CD8-positive, alpha-beta T cell (primary cell): ENCODE measurements at regions of chrX and their contacts with region 1.

Region 1: DNA sequence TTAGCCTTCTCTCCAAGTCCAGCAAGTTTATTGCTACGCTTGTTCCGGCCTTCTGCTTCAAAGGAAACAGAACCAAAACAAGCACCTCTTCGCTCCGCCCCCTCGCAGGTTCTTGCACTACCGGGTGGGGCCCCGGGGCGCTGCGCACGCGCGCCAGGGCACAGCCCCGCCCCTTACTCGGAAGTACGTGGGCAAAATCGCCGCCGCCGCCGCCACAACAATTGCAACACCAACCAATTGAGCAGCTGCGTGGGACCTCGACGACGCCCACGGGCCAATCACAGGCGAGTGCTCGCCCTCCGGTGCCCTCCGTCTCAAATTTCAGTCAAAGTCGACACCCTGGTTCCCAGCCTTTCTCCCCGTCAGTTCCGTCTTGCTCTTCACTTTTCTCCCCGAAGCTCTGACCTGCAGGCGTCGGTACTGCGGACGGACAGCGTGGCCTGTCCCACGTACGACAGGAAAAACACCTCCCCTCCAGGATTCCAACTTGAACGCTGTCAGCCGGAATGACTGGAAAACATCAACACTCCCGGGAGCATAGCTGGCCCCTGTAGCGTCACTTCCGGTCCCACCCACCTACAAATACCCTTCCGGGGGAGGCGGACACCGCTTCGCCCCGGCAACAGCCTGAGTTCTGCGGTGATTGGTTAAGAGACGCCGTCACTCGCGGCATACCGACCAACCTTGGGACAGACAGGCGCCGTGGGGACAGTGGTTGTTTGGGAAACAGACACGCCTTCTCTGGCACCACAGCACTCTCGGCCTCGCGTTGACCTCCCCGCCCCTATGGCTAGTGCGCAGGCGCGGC is 624 bp upstream of the OTUD5 start:
- DNase-seq: peak; percentile 83 to 98 (median 91)
- ATAC-seq: peak; percentile 76
- H3K4me3 ChIP-seq: peak overlapping the region; percentile 75 to 94
- H3K4me3 Mint-ChIP-seq: peak overlapping the region; percentile 99
- H3K27ac ChIP-seq: peak overlapping the region; percentile 100
- H3K27ac Mint-ChIP-seq: peak overlapping the region; percentile 100
- H3K4me1 ChIP-seq: peaks cover 44% of the 10 kb centered on the region
- H3K4me1 Mint-ChIP-seq: peaks cover 39% of the 10 kb centered on the region
- H3K27me3 ChIP-seq: no peaks in the 10 kb centered on the region
- H3K27me3 Mint-ChIP-seq: no peaks in the 10 kb centered on the region
- CTCF ChIP-seq: no peak

Region 2: DNA sequence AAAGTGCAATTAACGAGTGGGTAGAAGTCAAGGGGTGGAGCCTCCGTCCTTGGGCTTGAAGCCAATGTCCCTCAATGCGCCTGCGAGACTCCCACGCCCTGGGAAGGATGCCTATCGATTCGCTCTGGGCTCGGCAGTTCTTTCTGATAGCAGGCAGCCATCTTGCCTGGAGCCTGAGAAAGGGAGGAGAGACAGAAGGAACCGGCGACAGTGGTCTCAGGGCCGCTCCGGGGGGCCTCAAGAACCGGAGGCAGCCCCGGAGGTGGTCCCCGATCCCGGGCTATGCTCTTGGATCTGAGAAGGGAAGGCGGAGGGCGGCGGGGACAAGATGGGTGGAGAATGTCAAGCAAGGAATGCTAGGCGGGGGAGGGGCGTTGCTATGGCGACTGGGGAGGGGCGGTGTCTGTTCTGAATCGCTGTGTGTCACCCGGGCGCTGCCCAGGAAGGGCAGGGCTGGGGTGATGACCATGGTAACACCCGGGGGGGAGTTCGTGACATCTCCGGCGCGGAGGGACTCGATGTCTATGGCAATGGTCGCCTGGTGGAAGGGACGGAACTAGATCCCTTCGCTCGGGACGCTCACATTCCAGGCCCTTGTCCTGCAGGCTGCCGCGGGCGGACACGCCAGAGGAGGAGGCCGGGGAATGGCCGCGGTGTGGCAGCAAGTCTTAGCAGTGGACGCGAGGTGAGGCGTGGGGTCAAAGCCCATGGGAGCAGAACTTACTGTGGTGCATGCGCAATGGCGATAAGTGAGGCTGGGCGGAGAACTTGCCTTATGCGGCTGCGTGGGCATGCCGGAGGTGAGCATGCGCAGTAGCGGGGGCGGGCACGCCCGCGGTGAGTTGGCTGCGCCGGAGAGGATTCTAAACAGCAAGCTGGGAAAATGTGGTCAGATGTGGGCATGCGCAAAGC is 360.4 kb before region 1 on chrX and contains the start of gene WDR13:
- CTCF ChIA-PET with region 1: no interaction called
- POLR2A ChIA-PET with region 1: no interaction called
- intact Hi-C with region 1: loop called in 1 of 2 experiments (anchors 1 kb)
- DNase-seq: peak; percentile 79 to 94 (median 90)
- ATAC-seq: peak; percentile 82
- H3K4me3 ChIP-seq: peak within 1 kb of the TSS; percentile 90 to 99
- H3K4me3 Mint-ChIP-seq: peak within 1 kb of the TSS; percentile 94
- H3K27ac ChIP-seq: peak within 1 kb of the TSS; percentile 100
- H3K27ac Mint-ChIP-seq: peak within 1 kb of the TSS; percentile 100
- H3K4me1 ChIP-seq: peaks cover 7% of the 10 kb centered on the region
- H3K4me1 Mint-ChIP-seq: peaks cover 10% of the 10 kb centered on the region
- H3K27me3 ChIP-seq: no peaks in the 10 kb centered on the region
- H3K27me3 Mint-ChIP-seq: no peaks in the 10 kb centered on the region
- CTCF ChIP-seq: no peak
- total RNA-seq, gene WDR13: 41.6 to 51.6 TPM

Region 3: GRCh38 chrX:48826135-48826875 is 131.7 kb before region 1 on chrX and contains the start of gene ERAS:
- CTCF ChIA-PET with region 1: no interaction called
- POLR2A ChIA-PET with region 1: no interaction called
- intact Hi-C with region 1: no loop called
- DNase-seq: peak in 4 of 9 experiments; percentile 16 to 51 (median 32)
- ATAC-seq: peak; percentile 71
- H3K4me3 ChIP-seq: no peak within 1 kb of the TSS
- H3K4me3 Mint-ChIP-seq: peak within 1 kb of the TSS; percentile 68
- H3K27ac ChIP-seq: no peak within 1 kb of the TSS
- H3K27ac Mint-ChIP-seq: no peak within 1 kb of the TSS
- H3K4me1 ChIP-seq: no peaks in the 10 kb centered on the region
- H3K4me1 Mint-ChIP-seq: peaks cover 8% of the 10 kb centered on the region
- H3K27me3 ChIP-seq: peaks cover 0 to 5% of the 10 kb centered on the region in 2 experiments
- H3K27me3 Mint-ChIP-seq: peaks cover 17% of the 10 kb centered on the region
- CTCF ChIP-seq: no peak
- total RNA-seq, gene ERAS: not detected

Region 4: DNA sequence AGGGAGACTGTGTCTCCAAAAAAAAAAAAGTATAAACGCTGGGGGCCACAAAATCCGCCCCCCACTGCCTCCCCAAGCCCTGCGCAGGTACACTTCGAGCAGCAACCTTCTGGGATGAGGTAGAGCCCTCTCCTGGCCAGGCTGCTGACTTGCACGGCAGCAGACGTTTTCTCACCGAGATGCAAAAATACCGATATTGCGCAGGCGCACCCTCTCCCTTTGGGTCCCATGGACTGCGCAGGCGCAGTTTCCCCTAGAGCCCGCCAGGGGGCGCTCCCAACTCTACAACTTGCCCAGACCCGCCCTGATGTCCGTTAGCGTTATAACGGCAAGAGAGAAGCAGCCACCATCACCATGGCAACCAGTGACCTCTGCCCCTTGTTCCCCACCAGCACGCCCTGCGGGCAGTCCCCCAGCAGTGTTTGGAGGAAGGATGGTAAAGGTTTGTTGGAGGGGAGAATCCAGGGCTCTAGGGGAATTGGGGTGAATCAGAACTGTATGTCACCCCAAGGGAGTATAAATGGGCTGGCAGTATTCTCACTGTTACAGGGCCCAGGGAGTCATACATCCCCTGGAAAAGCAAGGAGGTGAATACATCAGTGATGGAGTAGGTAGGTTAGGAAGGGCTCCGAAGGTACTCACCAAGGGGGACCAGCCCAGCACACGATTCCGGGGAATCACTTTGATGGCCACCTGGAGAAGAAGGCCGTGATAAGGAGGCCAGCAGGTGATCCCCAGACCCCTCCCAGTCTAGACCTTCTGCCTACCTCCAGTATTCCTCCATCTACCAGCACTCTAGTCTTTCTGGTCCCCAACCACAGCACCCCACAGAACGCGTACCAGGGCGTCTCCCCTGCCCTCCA is 40.7 kb before region 1 on chrX:
- CTCF ChIA-PET with region 1: no interaction called
- POLR2A ChIA-PET with region 1: interaction called, 8 read pairs
- intact Hi-C with region 1: loop called (anchors 1 to 5 kb)
- DNase-seq: peak; percentile 77 to 93 (median 88)
- ATAC-seq: peak; percentile 37
- H3K4me3 ChIP-seq: peak overlapping the region; percentile 92 to 95
- H3K4me3 Mint-ChIP-seq: peak overlapping the region; percentile 97
- H3K27ac ChIP-seq: peak overlapping the region; percentile 75 to 100
- H3K27ac Mint-ChIP-seq: peak overlapping the region; percentile 97
- H3K4me1 ChIP-seq: peaks cover 58% of the 10 kb centered on the region
- H3K4me1 Mint-ChIP-seq: peaks cover 56% of the 10 kb centered on the region
- H3K27me3 ChIP-seq: no peaks in the 10 kb centered on the region
- H3K27me3 Mint-ChIP-seq: no peaks in the 10 kb centered on the region
- CTCF ChIP-seq: peak; percentile 77

Region 5: DNA sequence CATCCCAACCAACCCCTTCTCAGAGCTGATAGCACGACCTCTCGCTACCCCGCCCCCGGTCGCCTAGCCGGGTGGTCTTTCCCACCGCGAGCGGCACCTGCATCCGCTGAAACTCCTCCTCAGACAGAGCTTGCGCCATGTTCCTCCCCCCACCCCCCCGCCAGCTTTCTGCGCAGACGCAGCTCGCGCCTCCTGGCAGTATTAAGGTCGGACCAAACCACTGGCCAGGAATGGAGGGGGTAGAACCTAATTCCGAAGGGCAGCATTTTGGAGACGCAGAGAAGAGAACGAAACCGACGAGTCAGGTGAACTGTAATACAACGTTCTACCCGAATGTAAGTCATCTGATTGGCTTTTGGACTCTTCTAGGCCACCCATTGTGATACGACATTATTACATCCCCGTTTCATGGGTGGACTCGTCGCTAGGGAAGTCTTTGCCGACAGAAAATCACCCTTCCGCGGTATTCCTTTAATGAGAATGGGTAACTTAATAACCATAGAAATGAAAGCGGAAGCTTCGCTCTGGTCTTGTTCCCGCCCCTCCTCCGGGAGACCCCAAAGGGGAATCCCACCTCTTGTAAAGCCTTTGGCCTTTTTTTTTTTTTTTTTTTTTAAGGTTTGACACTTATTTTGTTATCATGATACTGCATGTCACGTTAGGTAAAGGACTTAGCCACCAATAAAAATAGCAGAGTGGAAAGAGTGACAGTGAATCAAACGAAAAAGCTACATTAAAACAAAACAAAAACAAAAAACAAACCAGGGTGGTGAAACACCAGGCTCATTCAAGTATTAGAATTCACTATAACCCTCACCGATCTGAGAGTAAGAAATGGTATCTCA is 44.3 kb after region 1 on chrX and contains the start of gene GRIPAP1:
- CTCF ChIA-PET with region 1: no interaction called
- POLR2A ChIA-PET with region 1: interaction called, 9 read pairs
- intact Hi-C with region 1: loop called (anchors 1 kb)
- DNase-seq: peak; percentile 63 to 95 (median 74)
- ATAC-seq: peak; percentile 79
- H3K4me3 ChIP-seq: peak within 1 kb of the TSS; percentile 82 to 87
- H3K4me3 Mint-ChIP-seq: peak within 1 kb of the TSS; percentile 98
- H3K27ac ChIP-seq: peak within 1 kb of the TSS; percentile 96 to 99
- H3K27ac Mint-ChIP-seq: peak within 1 kb of the TSS; percentile 99
- H3K4me1 ChIP-seq: peaks cover 16% of the 10 kb centered on the region
- H3K4me1 Mint-ChIP-seq: peaks cover 31% of the 10 kb centered on the region
- H3K27me3 ChIP-seq: no peaks in the 10 kb centered on the region
- H3K27me3 Mint-ChIP-seq: no peaks in the 10 kb centered on the region
- CTCF ChIP-seq: no peak
- total RNA-seq, gene GRIPAP1: 102 to 114 TPM

Region 6: GRCh38 chrX:49073601-49074571 is 115.9 kb after region 1 on chrX and contains the start of gene PRAF2:
- CTCF ChIA-PET with region 1: no interaction called
- POLR2A ChIA-PET with region 1: no interaction called
- intact Hi-C with region 1: loop called in 1 of 2 experiments (anchors 1 kb)
- DNase-seq: peak; percentile 74 to 95 (median 89)
- ATAC-seq: peak; percentile 96
- H3K4me3 ChIP-seq: peak within 1 kb of the TSS; percentile 64 to 76
- H3K4me3 Mint-ChIP-seq: peak within 1 kb of the TSS; percentile 79
- H3K27ac ChIP-seq: peak within 1 kb of the TSS; percentile 81 to 82
- H3K27ac Mint-ChIP-seq: peak within 1 kb of the TSS; percentile 91
- H3K4me1 ChIP-seq: peaks cover 13% of the 10 kb centered on the region
- H3K4me1 Mint-ChIP-seq: peaks cover 17% of the 10 kb centered on the region
- H3K27me3 ChIP-seq: no peaks in the 10 kb centered on the region
- H3K27me3 Mint-ChIP-seq: no peaks in the 10 kb centered on the region
- CTCF ChIP-seq: no peak
- total RNA-seq, gene PRAF2: 16.7 to 17.5 TPM

Region 7: GRCh38 chrX:49191033-49191871 is 233.2 kb after region 1 on chrX:
- CTCF ChIA-PET with region 1: no interaction called
- POLR2A ChIA-PET with region 1: no interaction called
- intact Hi-C with region 1: loop called in 1 of 2 experiments (anchors 1 kb)
- DNase-seq: peak; percentile 62 to 97 (median 78)
- ATAC-seq: peak; percentile 88
- H3K4me3 ChIP-seq: peak overlapping the region; percentile 71 to 77
- H3K4me3 Mint-ChIP-seq: peak overlapping the region; percentile 92
- H3K27ac ChIP-seq: peak overlapping the region; percentile 61 to 72
- H3K27ac Mint-ChIP-seq: peak overlapping the region; percentile 93
- H3K4me1 ChIP-seq: peaks cover 15% of the 10 kb centered on the region
- H3K4me1 Mint-ChIP-seq: peaks cover 26% of the 10 kb centered on the region
- H3K27me3 ChIP-seq: no peaks in the 10 kb centered on the region
- H3K27me3 Mint-ChIP-seq: no peaks in the 10 kb centered on the region
- CTCF ChIP-seq: no peak